ENCODE measurements at regions of chr5 and their contacts with region 1.

Region 1: DNA sequence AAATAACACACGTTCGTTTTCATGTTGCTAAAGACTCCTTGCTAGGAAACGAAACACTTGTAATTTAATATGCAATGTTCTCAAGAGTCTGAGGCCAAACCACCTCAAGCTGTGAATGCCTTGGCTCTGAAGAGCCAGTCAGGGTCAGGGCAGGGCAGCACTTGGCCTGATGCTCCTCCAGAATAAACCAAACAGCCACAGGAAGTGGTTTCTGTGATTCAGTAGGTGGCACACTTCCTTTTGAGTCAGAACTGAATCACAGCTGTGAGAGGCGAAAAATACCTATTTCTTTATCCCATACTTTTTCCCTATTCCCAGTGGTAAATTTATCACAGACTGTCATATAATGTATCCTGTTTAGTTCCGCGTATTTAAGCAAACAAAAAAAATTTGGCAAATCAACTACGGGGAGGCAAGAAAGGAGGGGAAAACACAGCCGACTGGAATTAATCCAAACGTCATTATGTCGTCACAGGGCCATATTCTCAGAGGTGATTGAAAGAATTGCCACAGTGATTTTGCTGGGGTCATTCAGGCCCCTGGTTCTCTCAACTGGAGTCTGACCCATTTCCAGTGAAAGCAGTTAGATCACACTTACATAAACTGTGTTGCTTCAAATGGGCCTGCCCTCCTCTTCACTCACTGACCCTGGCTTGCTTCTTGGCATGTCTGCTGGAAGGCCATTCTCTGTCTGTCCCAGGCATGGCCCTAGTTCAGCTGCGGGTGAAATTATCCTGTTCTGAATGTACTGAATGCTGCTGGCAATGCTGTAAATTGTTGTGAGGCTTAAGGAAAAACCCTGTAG is 71.2 kb downstream of the ARRDC3 start:
- DNase-seq: peak; percentile 76
- H3K4me3 Mint-ChIP-seq: peak overlapping the region; percentile 15
- H3K27ac Mint-ChIP-seq: peak overlapping the region; percentile 11
- H3K4me1 Mint-ChIP-seq: peaks cover 44% of the 10 kb centered on the region
- H3K27me3 Mint-ChIP-seq: no peaks in the 10 kb centered on the region
- CTCF ChIP-seq: no peak

Region 2: DNA sequence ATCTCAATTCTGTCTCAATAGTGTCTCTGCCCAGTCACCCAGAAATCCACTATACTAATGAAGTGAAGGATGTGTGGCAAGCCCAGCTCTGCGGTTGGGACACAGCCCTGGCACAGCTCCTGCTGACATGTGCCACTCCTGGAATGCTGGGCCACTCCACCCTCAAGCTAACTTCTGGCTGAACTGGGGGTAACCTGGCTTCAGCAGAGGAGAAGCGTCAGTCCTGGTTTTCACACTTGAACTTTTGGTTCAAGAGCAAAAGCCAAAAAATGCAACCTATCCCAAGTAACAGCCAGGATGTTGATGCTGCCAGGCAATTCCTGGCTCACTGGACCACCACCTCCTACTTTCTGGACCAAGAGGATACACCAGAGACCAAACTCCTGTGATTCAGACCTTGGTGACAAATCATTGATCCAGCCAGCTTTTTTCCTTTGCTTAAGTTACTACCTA is 15.2 kb before region 1 on chr5:
- CTCF ChIA-PET with region 1: interaction called, 12 read pairs
- intact Hi-C with region 1: no loop called
- DNase-seq: peak; percentile 59
- H3K4me3 Mint-ChIP-seq: no peak overlapping the region
- H3K27ac Mint-ChIP-seq: no peak overlapping the region
- H3K4me1 Mint-ChIP-seq: peaks cover 28% of the 10 kb centered on the region
- H3K27me3 Mint-ChIP-seq: no peaks in the 10 kb centered on the region
- CTCF ChIP-seq: no peak

Measured in Calu3 (cell line).